IMR-90 (cell line): ENCODE measurements at regions of chr6 and their contacts with region 1.

Region 1: GRCh38 chr6:34196126-34196830 is 40.4 kb upstream of the HMGA1 start:
- DNase-seq: peak; percentile 62
- ATAC-seq: peak; percentile 98
- H3K4me3 ChIP-seq: peak overlapping the region; percentile 39
- H3K27ac ChIP-seq: no peak overlapping the region; the same call in 1 of the 2 replicates
- H3K4me1 ChIP-seq: peaks cover 5% of the 10 kb centered on the region
- H3K27me3 ChIP-seq: no peaks in the 10 kb centered on the region
- CTCF ChIP-seq: peak; percentile 92
- POLR2A ChIP-seq: 0 out of 2 replicates have a peak, but pooled peaks have one; percentile 34
- RAD21 ChIP-seq: peak; percentile 95

Region 2: DNA sequence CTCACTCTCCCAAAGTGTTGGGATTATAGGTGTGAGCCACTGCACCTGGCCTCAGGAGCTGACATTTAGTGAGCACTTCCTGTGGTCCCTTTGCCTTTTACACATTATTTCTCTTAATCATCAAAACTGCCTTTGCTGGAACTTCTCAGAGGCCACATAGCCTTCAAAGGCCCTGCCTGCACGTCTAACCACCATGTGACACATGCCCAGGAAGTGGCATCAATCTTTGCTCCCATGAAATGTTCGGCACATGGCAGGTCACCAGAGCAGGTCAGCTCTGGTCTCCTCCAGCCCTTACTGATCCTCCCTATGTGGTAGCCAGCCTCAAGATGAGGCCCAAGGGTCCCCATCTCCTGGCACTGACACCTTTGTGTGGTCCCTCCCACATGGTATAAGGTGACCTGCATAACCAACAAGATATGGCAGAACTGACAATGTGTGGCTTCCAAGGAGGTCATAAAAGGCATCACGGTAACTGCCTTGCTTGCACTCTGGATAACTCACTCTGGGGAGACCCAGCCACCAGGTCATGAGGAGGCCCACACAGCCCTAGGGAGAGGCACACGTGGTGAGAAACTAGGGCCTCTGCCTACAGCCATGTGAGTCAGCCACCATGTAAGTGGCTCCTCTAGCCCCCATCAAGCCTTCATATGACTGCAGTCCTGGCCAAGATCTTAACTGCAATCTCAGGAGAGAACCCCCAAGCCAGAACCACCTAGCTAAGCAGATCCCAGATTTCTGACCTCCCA is 11.6 kb after region 1 on chr6:
- CTCF ChIA-PET with region 1: interaction called, 12 read pairs
- POLR2A ChIA-PET with region 1: no interaction called
- dilution Hi-C with region 1: no loop called
- in situ Hi-C with region 1: no loop called
- intact Hi-C with region 1: no loop called
- DNase-seq: no peak
- ATAC-seq: no peak
- H3K4me3 ChIP-seq: no peak overlapping the region
- H3K27ac ChIP-seq: no peak overlapping the region
- H3K4me1 ChIP-seq: no peaks in the 10 kb centered on the region
- H3K27me3 ChIP-seq: no peaks in the 10 kb centered on the region
- CTCF ChIP-seq: no peak
- POLR2A ChIP-seq: no peak
- RAD21 ChIP-seq: no peak

Region 3: GRCh38 chr6:34236131-34236996 is 40.1 kb after region 1 on chr6 and contains the start of gene HMGA1:
- CTCF ChIA-PET with region 1: interaction called, 3 read pairs
- POLR2A ChIA-PET with region 1: interaction called, 5 read pairs
- dilution Hi-C with region 1: no loop called
- in situ Hi-C with region 1: no loop called
- intact Hi-C with region 1: loop called (anchors 5 kb)
- DNase-seq: peak; percentile 86
- ATAC-seq: peak; percentile 78
- H3K4me3 ChIP-seq: peak within 1 kb of the TSS; percentile 76
- H3K27ac ChIP-seq: peak within 1 kb of the TSS; percentile 78
- H3K4me1 ChIP-seq: peaks cover 16% of the 10 kb centered on the region
- H3K27me3 ChIP-seq: no peaks in the 10 kb centered on the region
- CTCF ChIP-seq: no peak
- POLR2A ChIP-seq: peak; percentile 97
- RAD21 ChIP-seq: no peak
- total RNA-seq, gene HMGA1: 101 and 129 TPM in 2 replicates

Region 4: GRCh38 chr6:34248727-34249551 is 52.7 kb after region 1 on chr6 and contains the start of gene SMIM29:
- CTCF ChIA-PET with region 1: interaction called, 7 read pairs
- POLR2A ChIA-PET with region 1: no interaction called
- dilution Hi-C with region 1: no loop called
- in situ Hi-C with region 1: no loop called
- intact Hi-C with region 1: loop called (anchors 2 kb)
- DNase-seq: peak; percentile 91
- ATAC-seq: peak; percentile 85
- H3K4me3 ChIP-seq: peak within 1 kb of the TSS; percentile 65
- H3K27ac ChIP-seq: peak within 1 kb of the TSS; percentile 87
- H3K4me1 ChIP-seq: peaks cover 9% of the 10 kb centered on the region
- H3K27me3 ChIP-seq: no peaks in the 10 kb centered on the region
- CTCF ChIP-seq: peak; percentile 96
- POLR2A ChIP-seq: peak; percentile 74
- RAD21 ChIP-seq: peak; percentile 82
- total RNA-seq, gene SMIM29: 8.1 and 8.4 TPM in 2 replicates

Region 5: DNA sequence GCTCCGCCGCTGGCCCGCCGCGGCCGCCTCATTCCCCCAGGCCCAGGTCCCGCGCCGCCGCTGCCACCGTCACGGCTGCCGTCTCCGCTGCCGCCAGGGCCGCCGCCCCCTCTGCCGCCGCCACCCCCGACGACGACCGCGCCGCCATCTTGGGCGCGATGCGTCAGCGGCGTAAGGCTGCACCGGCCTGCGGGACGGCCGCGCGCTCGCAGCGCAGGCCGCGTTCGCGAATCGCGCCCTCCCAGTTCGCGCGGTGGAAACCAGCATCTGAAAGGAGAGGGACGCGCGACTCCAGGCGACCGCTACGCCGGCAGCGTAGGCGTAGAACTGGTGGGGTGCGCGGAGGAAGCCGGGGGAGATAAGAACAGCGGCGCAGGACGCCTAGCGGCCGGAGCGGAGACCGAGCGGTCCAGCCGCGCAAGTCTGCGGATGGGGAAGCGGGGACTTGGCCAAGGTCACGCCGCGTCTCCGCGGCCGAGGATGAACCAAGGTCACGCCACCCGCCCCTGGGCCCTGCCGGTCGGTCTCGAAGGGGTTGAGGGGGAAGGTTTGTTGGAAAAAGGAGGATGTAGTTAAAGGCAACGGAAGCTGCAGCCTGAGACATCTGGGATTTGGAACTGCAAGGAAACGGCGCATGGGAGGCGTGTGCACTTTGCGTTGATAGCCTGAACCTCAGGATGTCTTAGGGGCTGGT is 196.4 kb after region 1 on chr6 and contains the start of gene NUDT3:
- CTCF ChIA-PET with region 1: no interaction called
- POLR2A ChIA-PET with region 1: no interaction called
- dilution Hi-C with region 1: no loop called
- in situ Hi-C with region 1: no loop called
- intact Hi-C with region 1: loop called (anchors 1 kb)
- DNase-seq: peak; percentile 93
- ATAC-seq: peak; percentile 92
- H3K4me3 ChIP-seq: peak within 1 kb of the TSS; percentile 93
- H3K27ac ChIP-seq: peak within 1 kb of the TSS; percentile 94
- H3K4me1 ChIP-seq: no peaks in the 10 kb centered on the region
- H3K27me3 ChIP-seq: no peaks in the 10 kb centered on the region
- CTCF ChIP-seq: peak; percentile 86
- POLR2A ChIP-seq: no peak
- RAD21 ChIP-seq: peak; percentile 80
- total RNA-seq, gene NUDT3: 17.2 and 21.4 TPM in 2 replicates

Region 6: DNA sequence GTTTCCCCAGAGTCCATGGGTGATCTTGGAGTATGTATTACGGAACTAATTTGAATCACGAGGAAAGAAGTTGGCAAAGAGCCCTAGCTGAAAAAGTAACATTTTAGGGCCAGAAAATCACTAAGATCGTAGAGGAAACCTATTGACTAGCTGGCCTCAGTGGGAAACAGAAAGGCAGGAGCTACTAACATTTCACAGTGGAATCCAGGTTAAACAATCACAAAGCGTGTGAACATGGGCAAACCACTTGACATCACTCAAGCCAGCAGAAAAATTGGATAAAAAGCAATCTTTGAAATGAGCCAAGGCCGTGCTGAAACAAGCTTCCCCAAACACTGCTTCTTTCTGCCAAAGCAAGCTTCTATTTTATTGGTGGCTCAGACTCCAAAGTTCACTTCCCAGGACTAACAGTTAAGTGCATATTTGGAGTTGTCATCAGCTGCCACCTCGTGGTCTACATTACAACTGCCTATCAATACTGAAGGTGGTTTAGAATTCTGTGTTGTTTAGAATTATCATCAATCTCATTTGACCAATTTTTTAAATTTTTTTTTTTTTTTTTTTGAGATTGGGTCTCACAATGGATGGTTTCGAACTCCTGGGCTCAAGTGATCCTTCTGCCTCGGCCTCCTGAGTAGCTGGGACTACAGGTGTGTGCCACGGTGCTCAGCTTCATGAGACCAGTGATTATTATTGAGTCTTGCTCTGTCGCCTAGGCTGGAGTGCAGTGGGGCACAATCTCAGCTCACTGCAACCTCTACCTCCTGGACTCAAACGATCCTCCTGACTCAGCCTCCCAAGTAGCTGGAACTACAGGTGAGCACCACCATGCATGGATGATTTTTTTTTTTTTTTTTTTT is 219.0 kb after region 1 on chr6:
- CTCF ChIA-PET with region 1: interaction called, 8 read pairs
- POLR2A ChIA-PET with region 1: no interaction called
- dilution Hi-C with region 1: no loop called
- in situ Hi-C with region 1: no loop called
- intact Hi-C with region 1: loop called (anchors 2 kb)
- DNase-seq: peak; percentile 65
- ATAC-seq: peak; percentile 50
- H3K4me3 ChIP-seq: no peak overlapping the region
- H3K27ac ChIP-seq: no peak overlapping the region
- H3K4me1 ChIP-seq: no peaks in the 10 kb centered on the region
- H3K27me3 ChIP-seq: no peaks in the 10 kb centered on the region
- CTCF ChIP-seq: peak; percentile 63
- POLR2A ChIP-seq: 0 out of 2 replicates have a peak, but pooled peaks have one; percentile 17
- RAD21 ChIP-seq: peak; percentile 65

Region 7: DNA sequence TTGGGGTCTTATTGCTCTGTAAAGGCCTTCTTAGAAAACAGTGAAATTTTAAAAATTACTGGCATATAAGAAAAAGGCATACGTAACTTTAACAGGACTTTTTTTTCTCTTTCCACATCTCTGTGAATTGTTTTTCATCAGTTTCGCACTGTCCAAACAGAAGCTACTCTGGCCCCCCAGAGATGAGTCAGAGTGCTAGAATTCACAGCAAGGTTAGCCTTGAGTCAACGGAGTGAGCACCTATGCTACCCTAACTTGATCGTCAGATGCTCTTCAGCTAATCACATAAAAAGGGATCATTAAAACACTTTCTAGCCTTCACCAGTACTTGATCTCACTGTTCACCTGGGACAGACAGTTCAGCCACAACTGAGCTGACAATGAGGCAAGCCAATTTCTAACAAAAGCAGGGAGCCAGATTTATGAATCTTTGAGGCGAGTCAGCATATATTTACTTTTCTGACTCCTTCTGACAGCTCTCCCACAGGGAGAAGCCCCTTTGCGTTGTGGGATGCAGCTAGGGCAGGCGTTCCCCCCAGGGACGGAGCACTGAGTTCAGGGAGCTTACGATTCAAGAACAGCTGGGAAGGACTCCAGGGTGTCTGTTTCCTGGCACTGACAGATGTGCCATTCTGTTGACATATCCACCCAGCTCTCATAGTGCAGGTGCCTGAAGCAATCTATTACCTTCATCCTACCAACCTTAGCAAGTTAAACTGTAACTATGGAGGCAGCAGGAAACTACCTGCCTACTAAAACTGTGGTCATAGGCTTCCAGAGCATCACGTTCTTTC is 406.2 kb after region 1 on chr6:
- CTCF ChIA-PET with region 1: no interaction called
- POLR2A ChIA-PET with region 1: no interaction called
- dilution Hi-C with region 1: no loop called
- in situ Hi-C with region 1: loop called (anchors 10 kb)
- intact Hi-C with region 1: no loop called
- DNase-seq: peak; percentile 28
- ATAC-seq: peak; percentile 33; the same call in 1 of the 2 replicates
- H3K4me3 ChIP-seq: no peak overlapping the region
- H3K27ac ChIP-seq: no peak overlapping the region
- H3K4me1 ChIP-seq: peaks cover 10% of the 10 kb centered on the region
- H3K27me3 ChIP-seq: no peaks in the 10 kb centered on the region
- CTCF ChIP-seq: no peak
- POLR2A ChIP-seq: no peak
- RAD21 ChIP-seq: no peak